ENCODE measurements at regions of chr4 and their contacts with region 1.

Region 1: DNA sequence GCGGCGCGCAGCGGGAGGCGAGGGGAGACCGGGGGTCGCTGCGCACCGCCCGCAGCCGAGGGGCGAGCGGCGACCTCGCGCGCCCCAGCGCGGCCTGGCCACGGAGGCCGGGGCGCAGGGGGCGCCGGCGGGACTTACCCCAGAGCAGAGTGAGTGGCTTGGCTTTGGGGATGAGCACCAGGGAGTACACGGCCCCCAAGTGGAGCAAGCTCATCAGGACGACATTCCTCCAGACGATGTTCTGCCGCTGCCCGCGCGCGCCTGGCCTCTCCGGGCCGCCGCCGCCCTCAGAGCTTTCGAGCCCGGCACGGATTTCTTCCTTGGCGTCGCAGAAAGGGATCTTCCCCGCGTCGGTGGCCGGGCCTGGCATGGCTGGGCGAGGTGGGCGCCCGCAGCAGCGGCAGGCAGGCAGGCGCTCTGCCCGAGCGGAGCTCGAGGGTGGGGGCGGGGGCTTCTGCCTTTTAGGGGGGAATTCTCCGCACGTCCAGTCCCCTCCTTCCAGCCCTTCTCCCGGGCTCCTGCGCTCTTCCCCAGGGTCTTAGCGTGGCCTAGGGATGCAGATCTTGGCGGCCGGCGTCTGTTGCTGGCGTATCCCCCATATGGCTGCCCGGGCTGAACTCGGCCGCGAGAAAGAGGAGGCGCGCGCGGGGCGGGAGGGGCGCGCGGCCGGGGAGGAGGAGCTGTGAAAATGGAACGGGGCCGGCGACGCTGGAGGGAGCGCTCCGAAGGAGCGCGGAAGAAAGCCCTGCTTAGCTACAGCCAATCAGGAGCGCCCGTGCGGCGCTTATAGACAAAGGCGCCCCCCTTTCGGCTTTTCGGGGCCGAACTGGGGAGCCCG is at the start of gene SCD5:
- DNase-seq: peak in 1 of 2 experiments; percentile 64
- H3K4me3 ChIP-seq: peak within 1 kb of the TSS; percentile 24 to 79 (median 42)
- H3K27ac ChIP-seq: no peak within 1 kb of the TSS
- H3K4me1 ChIP-seq: peaks cover 0 to 12% (median 3%) of the 10 kb centered on the region in 4 experiments
- H3K27me3 ChIP-seq: peaks cover 65 to 86% (median 81%) of the 10 kb centered on the region in 4 experiments
- CTCF ChIP-seq: no peak
- EP300 ChIP-seq: no peak
- POLR2A ChIP-seq: no peak
- RAD21 ChIP-seq: no peak
- total RNA-seq, gene SCD5: 0.88 and 1.2 TPM in 2 replicates

Region 2: DNA sequence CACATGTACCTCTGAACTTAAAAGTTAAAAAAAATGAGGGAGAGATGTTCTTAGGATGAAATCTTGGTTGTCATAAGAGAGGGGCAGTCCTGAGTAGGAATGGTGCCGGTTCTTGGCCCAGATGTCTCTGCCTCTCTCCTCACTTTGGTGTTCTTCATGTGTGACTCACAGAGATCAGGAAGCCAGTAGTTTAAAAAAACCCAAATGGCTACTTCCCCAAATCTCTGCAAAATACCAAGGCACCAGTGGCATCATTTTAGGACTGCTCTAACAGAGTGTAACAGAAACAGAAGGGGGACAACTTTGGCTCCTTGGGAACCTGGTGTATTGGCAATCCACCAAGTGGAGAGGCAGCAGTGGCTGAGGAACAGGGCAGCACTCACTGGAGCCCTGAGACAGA is 116.6 kb before region 1 on chr4:
- CTCF ChIA-PET with region 1: no interaction called
- POLR2A ChIA-PET with region 1: no interaction called
- DNase-seq: no peak
- H3K4me3 ChIP-seq: no peak overlapping the region
- H3K27ac ChIP-seq: no peak overlapping the region
- H3K4me1 ChIP-seq: no peaks in the 10 kb centered on the region; a peak in 1 of 7 replicates
- H3K27me3 ChIP-seq: no peaks in the 10 kb centered on the region; a peak in 1 of 7 replicates
- CTCF ChIP-seq: no peak
- EP300 ChIP-seq: no peak
- POLR2A ChIP-seq: no peak
- RAD21 ChIP-seq: no peak

Region 3: GRCh38 chr4:82785611-82786400 is 12.6 kb before region 1 on chr4:
- CTCF ChIA-PET with region 1: interaction called, 16 read pairs
- POLR2A ChIA-PET with region 1: interaction called, 5 read pairs
- DNase-seq: no peak
- H3K4me3 ChIP-seq: peak overlapping the region in 1 of 4 experiments; percentile 15; a peak in 1 of 8 replicates
- H3K27ac ChIP-seq: no peak overlapping the region
- H3K4me1 ChIP-seq: peaks cover 0 to 11% (median 3%) of the 10 kb centered on the region in 4 experiments; a peak in 4 of 7 replicates
- H3K27me3 ChIP-seq: peaks cover 67 to 96% (median 92%) of the 10 kb centered on the region in 4 experiments
- CTCF ChIP-seq: no peak
- EP300 ChIP-seq: no peak; a peak in 1 of 3 replicates
- POLR2A ChIP-seq: no peak
- RAD21 ChIP-seq: no peak

Region 4: GRCh38 chr4:82811838-82812341 is 13.5 kb after region 1 on chr4:
- CTCF ChIA-PET with region 1: interaction called, 14 read pairs
- POLR2A ChIA-PET with region 1: interaction called, 4 read pairs
- DNase-seq: no peak
- H3K4me3 ChIP-seq: no peak overlapping the region
- H3K27ac ChIP-seq: no peak overlapping the region
- H3K4me1 ChIP-seq: peaks cover 0 to 2% (median 0%) of the 10 kb centered on the region in 4 experiments; a peak in 2 of 7 replicates
- H3K27me3 ChIP-seq: peaks cover 10 to 41% (median 35%) of the 10 kb centered on the region in 4 experiments
- CTCF ChIP-seq: no peak
- EP300 ChIP-seq: peak in 1 of 2 experiments; percentile 54; a peak in 1 of 3 replicates
- POLR2A ChIP-seq: no peak
- RAD21 ChIP-seq: no peak

Measured in H1 (cell line).